Activated T-helper 2 cell treated with anti-CD3 and anti-CD28 coated beads, Interferon-gamma antibody, Interleukin-2, Interleukin-4, amounts not matched to agents 10 μg/mL and 5 μg/mL and 100 μg/mL, durations not matched to agents 14 hours and 24 hours and 36 hours (primary cell): ENCODE measurements at regions of chr7 and their contacts with region 1.

Region 1: DNA sequence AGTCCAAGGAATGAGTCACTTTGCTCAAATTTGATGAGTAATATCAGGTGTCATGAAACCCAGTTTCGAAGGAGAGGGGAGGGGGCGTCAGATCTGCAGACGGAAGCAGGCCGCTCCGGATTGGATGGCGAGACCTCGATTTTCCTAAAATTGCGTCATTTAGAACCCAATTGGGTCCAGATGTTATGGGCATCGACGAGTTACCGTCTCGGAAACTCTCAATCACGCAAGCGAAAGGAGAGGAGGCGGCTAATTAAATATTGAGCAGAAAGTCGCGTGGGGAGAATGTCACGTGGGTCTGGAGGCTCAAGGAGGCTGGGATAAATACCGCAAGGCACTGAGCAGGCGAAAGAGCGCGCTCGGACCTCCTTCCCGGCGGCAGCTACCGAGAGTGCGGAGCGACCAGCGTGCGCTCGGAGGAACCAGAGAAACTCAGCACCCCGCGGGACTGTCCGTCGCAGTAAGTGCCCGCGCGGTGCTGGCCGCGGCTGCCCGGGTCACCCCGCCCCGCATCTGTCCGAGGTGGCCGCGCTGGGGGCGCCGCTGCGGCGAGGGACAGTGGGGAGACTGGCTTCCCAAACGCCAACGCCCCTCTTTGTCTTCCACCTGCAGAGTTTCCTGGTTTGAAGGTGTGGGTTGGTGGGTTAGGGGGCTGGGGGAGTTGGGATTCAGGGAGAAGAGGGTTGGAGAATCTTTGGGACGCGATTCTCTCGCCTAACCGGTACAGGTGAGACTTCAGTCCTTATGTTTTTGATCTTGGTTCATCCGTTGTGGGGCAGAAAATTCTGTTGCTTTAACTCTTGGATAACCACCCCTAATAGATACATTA is at the start of gene TAC1:
- DNase-seq: no peak
- H3K4me3 Mint-ChIP-seq: no peak within 1 kb of the TSS
- H3K27ac Mint-ChIP-seq: no peak within 1 kb of the TSS
- H3K4me1 Mint-ChIP-seq: peaks cover 4% of the 10 kb centered on the region
- H3K27me3 Mint-ChIP-seq: peaks cover 57% of the 10 kb centered on the region
- total RNA-seq, gene TAC1: 1.8 and 2.0 TPM in 2 replicates

Region 2: DNA sequence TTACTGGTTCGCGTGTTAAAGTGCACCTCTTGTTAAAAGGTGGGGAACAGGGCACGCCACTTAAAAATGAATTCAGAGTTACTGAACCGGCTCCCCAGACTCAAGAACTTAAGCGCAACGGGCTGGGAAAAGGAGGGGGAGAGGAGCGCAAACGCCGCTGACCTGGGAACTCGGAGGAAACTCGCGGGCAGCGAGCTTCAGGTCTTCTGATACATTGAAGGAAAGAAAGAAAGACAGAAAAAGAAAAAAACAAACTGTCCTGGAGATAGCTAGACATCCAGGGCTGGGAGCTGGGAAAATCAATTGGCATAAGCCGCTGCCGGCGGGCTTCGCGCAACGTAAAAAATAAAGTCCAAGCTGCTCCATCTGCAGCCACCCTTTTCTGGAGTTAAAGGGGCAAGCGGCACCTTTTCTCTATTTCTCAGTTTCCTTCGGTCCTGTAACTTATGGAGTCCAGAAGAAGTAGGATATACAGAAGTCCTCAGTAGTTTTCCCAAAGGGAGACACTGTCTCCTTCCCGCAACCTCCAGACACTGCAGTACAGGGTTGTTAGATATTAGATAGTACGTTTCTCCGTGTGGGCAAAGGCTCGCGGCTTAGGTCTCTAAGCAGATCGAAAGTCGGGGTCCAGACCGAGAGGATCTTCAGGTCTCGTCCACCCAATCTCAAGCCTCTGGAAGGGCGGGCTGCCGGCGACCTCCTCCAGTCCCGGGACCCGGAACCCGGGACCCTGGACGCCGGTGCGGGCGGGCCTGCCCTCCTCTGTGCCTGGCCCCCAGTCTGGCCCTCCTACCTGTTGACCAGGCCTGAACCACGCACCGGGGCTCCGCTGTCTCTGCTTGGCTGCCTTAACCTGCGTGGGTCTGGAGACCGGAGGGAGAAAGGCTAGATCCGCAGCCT is 728.4 kb before region 1 on chr7:
- intact Hi-C with region 1: loop called (anchors 5 kb)
- DNase-seq: no peak
- H3K4me3 Mint-ChIP-seq: no peak overlapping the region
- H3K27ac Mint-ChIP-seq: no peak overlapping the region
- H3K4me1 Mint-ChIP-seq: peaks cover 4% of the 10 kb centered on the region
- H3K27me3 Mint-ChIP-seq: peaks cover 85% of the 10 kb centered on the region

Region 3: GRCh38 chr7:97770850-97771249 is 38.9 kb after region 1 on chr7:
- intact Hi-C with region 1: no loop called
- DNase-seq: no peak
- H3K4me3 Mint-ChIP-seq: no peak overlapping the region
- H3K27ac Mint-ChIP-seq: no peak overlapping the region
- H3K4me1 Mint-ChIP-seq: no peaks in the 10 kb centered on the region
- H3K27me3 Mint-ChIP-seq: no peaks in the 10 kb centered on the region